Right ventricle myocardium inferior (tissue), 1 donor: ENCODE measurements at regions of chr7 and their contacts with region 1.

Region 1: DNA sequence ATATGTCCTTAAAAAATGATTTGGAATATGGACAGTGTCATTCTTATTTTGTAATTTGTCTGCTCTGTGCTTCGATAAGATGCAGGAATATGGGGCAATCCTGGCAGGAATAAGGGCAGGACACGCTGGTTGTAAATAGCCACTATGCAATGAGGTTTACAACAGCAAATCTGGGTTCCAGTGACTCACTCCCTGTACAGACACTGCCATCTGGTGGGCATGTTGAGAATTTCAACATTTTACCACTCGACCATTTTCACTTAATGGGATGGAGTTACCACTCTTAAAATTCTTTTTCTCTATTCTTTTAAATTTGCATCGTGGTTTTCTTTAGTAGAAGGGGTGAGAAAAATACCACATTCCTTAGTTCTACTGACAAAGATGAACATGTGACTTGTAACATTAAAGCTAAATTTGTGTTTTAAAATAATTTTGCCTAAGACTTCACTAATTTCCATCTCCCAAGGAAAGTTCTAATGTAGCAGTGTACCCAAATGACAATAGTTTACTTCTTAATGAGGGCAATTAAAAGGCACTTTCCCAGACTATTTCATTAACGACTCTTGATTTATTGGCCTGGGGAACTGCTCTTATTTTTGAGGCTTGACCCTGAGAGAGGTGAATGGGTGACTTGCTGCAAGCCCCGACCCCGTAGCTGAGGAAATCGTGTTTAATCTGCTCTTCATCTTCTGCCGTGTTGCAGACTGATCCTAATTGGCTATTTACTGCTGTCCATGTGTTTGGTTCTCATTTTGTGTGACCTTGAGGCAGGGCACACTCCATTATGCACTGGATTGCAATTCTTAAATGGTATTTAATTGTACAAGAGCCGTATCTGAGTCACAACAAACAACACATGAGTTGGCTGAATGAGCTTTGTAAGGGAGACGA is 173.6 kb upstream of the IMMP2L start:
- DNase-seq: no peak
- ATAC-seq: peak; percentile 61

Region 2: GRCh38 chr7:111098011-111098925 is 637.6 kb before region 1 on chr7:
- intact Hi-C with region 1: loop called (anchors 10 kb)
- DNase-seq: no peak
- ATAC-seq: peak; percentile 67

Region 3: GRCh38 chr7:111329367-111330234 is 406.3 kb before region 1 on chr7:
- intact Hi-C with region 1: loop called (anchors 10 kb)
- DNase-seq: no peak
- ATAC-seq: no peak

Region 4: DNA sequence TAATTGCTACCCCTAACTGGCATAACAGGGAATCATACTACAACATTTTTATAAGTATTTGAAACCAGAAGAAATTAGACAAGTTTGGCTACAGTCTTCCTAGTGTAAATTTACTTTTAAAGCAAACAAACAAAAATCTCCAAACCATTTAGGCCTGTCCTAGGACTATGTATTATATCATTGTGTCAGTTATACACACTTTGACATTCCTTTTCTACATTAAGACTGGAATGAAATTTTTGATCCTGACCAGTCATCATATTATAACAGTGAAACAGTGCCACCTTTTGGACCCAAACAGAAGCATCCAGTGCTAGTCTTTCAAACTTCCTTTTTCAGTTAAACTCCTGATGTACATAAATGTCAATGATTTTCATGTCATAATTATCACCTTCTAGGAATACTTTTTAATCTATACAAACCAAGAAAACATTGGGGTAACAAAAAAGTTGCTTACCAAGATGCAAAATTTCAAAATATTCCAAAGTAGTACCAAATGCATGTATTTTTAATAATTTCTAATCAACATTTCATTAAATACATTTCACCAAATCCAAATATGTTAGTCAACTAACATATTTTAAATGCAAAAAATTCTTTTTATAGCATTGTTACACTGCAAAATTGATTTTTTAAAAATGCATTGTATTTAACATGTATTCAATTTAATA is 249.3 kb before region 1 on chr7:
- intact Hi-C with region 1: loop called (anchors 5 kb)
- DNase-seq: no peak
- ATAC-seq: no peak

Region 5: DNA sequence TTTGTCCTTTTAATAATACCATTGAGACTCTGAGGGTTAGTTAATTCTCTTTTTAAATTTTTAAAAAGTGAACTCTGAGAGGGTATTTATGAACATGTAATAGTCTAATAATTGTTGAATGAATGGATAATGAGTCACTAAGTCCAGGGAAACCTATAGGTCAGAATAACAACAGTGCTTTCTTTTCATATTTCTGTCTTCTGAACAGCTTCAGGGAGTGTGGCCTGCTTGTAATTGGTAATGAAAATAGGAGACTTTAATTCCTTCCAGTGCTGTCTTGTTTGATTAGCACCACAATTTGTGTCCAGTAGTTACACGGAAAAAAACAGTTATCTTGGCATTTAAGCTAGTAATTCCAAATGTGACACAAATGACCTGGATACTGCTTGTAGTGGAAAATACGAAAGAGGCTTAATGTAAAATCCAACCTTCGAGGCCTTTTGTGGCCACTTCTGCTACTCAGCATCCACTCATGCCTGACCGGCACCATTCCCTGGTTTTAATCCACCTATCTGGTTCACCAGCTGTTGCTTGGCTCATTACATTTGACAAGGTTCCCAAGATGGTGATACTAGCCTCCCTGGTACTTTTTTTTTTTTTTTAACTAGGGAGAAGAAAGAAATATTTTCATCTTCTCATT is 24.4 kb before region 1 on chr7:
- intact Hi-C with region 1: no loop called
- DNase-seq: no peak
- ATAC-seq: no peak